Transverse colon (tissue), 4 donors: ENCODE measurements at regions of chr2 and their contacts with region 1.

Region 1: DNA sequence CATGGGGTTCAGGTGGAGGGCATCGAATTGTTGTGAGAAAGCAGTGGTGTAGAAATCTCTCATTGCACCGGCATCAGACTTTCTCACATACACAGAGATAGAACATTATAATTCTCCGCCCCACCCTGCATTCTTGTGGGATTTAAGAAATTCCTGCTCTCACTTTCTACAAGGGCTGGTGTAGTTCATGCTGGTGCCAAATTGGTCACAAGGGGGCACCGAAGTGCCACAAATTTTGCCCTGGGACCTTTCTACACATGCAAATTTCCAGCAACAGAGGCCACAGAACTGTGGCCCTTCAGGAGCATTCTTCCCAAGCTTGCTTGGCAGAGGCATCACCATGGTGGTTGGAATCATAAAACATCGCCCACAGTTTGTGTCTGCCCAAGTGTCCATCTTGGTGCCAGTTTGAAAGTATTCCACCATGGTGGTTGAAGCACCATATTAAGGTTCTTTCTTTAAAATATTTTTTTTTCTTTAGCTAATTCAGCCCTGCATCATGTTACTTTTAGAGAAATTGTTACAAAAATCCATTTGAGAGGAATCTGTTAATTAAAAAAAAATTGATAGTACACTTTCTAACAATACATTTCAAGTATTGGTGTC is 521.2 kb upstream of the FANCL start:
- DNase-seq: peak; percentile 35
- H3K4me3 ChIP-seq: no peak overlapping the region
- H3K27ac ChIP-seq: no peak overlapping the region
- H3K4me1 ChIP-seq: no peaks in the 10 kb centered on the region
- H3K27me3 ChIP-seq: no peaks in the 10 kb centered on the region
- CTCF ChIP-seq: peak in 4 of 5 experiments; percentile 22 to 43 (median 40)
- EP300 ChIP-seq: no peak
- POLR2A ChIP-seq: no peak

Region 2: DNA sequence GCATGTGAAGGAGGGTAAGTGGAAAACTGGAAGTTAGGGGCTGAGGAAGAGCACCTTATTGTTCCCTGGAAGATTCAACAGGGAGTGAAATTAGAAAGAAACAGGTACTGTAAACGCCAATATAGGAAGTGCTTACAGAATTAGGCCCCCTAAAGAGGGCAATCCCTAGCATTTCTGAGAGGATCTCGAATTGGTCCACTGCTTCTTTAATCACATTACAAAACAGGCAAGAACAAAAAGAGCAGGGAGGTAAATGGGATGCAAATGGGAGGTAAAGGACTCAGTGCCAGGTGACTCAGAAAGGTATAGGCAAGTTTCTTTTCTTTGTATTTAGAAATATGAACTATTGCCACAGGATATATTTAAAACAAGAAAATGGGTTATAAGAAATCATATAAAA is 404.8 kb before region 1 on chr2:
- in situ Hi-C with region 1: no loop called
- intact Hi-C with region 1: no loop called
- DNase-seq: no peak
- H3K4me3 ChIP-seq: no peak overlapping the region
- H3K27ac ChIP-seq: no peak overlapping the region
- H3K4me1 ChIP-seq: no peaks in the 10 kb centered on the region
- H3K27me3 ChIP-seq: no peaks in the 10 kb centered on the region
- CTCF ChIP-seq: no peak
- EP300 ChIP-seq: no peak
- POLR2A ChIP-seq: no peak

Region 3: GRCh38 chr2:58497168-58497567 is 265.1 kb before region 1 on chr2:
- in situ Hi-C with region 1: no loop called
- intact Hi-C with region 1: no loop called
- DNase-seq: no peak
- H3K4me3 ChIP-seq: no peak overlapping the region
- H3K27ac ChIP-seq: no peak overlapping the region
- H3K4me1 ChIP-seq: no peaks in the 10 kb centered on the region
- H3K27me3 ChIP-seq: no peaks in the 10 kb centered on the region
- CTCF ChIP-seq: no peak
- EP300 ChIP-seq: no peak
- POLR2A ChIP-seq: no peak

Region 4: GRCh38 chr2:60608679-60609078 is 1846.4 kb after region 1 on chr2:
- in situ Hi-C with region 1: loop called in 1 of 4 experiments (anchors 25 kb)
- intact Hi-C with region 1: no loop called
- DNase-seq: no peak
- H3K4me3 ChIP-seq: no peak overlapping the region
- H3K27ac ChIP-seq: no peak overlapping the region
- H3K4me1 ChIP-seq: no peaks in the 10 kb centered on the region
- H3K27me3 ChIP-seq: no peaks in the 10 kb centered on the region
- CTCF ChIP-seq: no peak
- EP300 ChIP-seq: no peak
- POLR2A ChIP-seq: no peak